ENCODE measurements at regions of chr1 and their contacts with region 1.

Region 1: GRCh38 chr1:50332941-50333594 is 90.2 kb downstream of the DMRTA2 start:
- DNase-seq: no peak
- H3K4me3 ChIP-seq: peak overlapping the region; percentile 34
- H3K27me3 ChIP-seq: peaks cover 5% of the 10 kb centered on the region
- CTCF ChIP-seq: peak; percentile 57

Region 2: DNA sequence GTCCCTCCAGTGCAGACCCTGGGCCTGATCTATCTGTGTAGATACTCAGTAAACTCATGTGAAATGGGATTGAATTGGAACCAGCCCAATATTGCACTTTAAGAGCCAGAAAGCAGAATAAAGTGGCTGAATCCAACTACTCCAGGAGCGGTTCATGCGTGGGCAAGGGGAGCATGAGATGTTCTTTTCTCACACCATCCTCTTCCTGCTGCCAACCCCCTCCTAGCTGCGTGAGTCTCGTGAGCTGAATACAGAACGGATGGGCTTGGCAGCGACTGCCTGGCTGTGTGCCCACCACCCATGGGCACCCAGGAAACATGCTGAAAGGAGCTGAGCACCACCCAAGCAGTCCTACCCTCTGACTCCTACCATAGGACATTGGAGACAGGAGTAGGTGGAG is 96.0 kb before region 1 on chr1:
- CTCF ChIA-PET with region 1: no interaction called
- POLR2A ChIA-PET with region 1: no interaction called
- DNase-seq: no peak
- H3K4me3 ChIP-seq: no peak overlapping the region
- H3K27me3 ChIP-seq: no peaks in the 10 kb centered on the region
- CTCF ChIP-seq: no peak

Region 3: GRCh38 chr1:50343323-50343722 is 10.3 kb after region 1 on chr1:
- CTCF ChIA-PET with region 1: interaction called, 37 read pairs
- POLR2A ChIA-PET with region 1: no interaction called
- DNase-seq: no peak
- H3K4me3 ChIP-seq: no peak overlapping the region
- H3K27me3 ChIP-seq: peaks cover 4% of the 10 kb centered on the region; the same call in 1 of the 2 replicates
- CTCF ChIP-seq: no peak

Region 4: DNA sequence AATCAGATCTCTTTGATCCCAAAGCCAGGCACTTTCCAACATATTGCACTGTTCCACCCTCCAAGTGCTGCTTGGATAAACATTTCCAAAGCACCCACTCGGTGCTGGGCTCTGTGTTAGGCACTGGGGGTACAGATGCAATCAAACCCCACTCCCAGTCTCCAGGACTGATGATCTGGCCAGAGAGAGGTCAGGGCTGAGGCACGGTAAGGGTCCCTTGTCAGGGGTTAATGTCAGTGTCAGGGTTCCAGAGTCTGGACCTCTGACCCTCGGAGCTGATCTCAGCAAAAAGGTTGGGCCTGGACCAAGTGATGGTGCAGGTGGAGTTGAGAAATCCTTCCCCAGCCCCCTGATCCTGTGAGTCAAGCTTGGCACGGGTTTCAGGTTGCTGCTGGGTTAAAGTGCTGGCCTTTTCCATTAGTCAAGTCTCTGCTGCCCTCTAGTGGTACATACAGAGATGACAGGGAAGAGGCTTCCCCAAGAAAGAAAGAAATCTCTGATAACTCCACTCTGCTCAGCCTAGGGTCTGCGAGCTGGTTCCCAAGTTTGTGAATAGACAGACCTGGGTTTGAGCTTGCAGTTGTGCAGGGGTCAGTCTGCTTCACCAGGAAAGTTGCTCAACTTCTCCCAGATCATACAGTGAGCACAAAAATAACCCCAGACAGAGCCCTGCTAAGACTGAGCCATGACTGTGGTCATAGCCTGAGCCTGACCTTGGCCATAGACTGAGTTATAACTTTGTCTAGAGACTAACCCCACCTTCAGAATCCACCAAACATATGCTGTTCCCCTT is 15.6 kb after region 1 on chr1:
- CTCF ChIA-PET with region 1: interaction called, 37 read pairs
- POLR2A ChIA-PET with region 1: no interaction called
- DNase-seq: peak; percentile 3
- H3K4me3 ChIP-seq: no peak overlapping the region
- H3K27me3 ChIP-seq: 0 out of 2 replicates have a peak, but pooled peaks cover 3% of the 10 kb centered on the region
- CTCF ChIP-seq: peak; percentile 86